ENCODE measurements at regions of chr10 and their contacts with region 1.

Region 1: DNA sequence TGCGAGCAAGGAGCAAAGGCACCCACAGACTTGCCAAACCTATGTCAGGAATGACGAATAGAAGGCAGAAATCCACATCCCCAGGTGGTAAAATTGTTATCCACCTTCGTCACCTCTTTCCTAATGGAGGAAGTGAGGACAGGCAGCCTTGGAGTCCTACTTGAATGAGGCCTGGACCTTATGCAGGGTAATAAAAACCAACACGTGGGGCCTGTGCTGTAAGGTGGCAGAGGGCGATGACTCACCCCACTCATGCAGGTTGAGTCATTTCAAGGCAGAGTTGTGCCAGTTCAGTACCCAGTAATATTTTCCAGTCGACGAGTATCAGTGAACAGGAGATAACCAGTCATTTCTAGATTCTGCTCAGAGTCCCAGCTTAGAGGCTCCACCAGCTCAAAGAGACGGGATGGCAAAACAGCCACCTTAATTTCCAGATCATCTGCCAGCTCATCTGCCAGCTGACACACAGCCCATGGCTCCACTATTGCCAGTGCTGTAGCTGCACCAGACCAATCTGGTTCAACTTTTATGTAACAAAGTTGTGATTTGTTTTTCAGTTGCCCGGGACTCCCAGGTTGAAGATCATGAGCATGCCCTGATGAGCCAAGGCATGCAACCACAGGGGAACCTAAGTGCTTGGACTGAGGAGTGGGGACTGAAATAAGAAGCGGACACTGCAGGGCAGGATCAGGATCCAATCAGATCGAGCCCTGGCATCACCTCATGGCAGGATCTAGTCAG is 176.2 kb upstream of the ITGB1 start:
- DNase-seq: peak; percentile 88
- H3K4me3 Mint-ChIP-seq: peak overlapping the region; percentile 41
- H3K27ac Mint-ChIP-seq: peak overlapping the region; percentile 79
- H3K4me1 Mint-ChIP-seq: peaks cover 78% of the 10 kb centered on the region
- H3K27me3 Mint-ChIP-seq: no peaks in the 10 kb centered on the region

Region 2: GRCh38 chr10:31745612-31746376 is 1388.4 kb before region 1 on chr10:
- CTCF ChIA-PET with region 1: no interaction called
- intact Hi-C with region 1: loop called (anchors 10 kb)
- DNase-seq: peak; percentile 84
- H3K4me3 Mint-ChIP-seq: no peak overlapping the region
- H3K27ac Mint-ChIP-seq: peak overlapping the region; percentile 95
- H3K4me1 Mint-ChIP-seq: peaks cover 47% of the 10 kb centered on the region
- H3K27me3 Mint-ChIP-seq: no peaks in the 10 kb centered on the region

Region 3: GRCh38 chr10:32239770-32240169 is 894.4 kb before region 1 on chr10:
- CTCF ChIA-PET with region 1: no interaction called
- intact Hi-C with region 1: loop called (anchors 5 kb)
- DNase-seq: no peak
- H3K4me3 Mint-ChIP-seq: no peak overlapping the region
- H3K27ac Mint-ChIP-seq: no peak overlapping the region
- H3K4me1 Mint-ChIP-seq: peaks cover 9% of the 10 kb centered on the region
- H3K27me3 Mint-ChIP-seq: no peaks in the 10 kb centered on the region

Region 4: GRCh38 chr10:32680803-32681557 is 453.2 kb before region 1 on chr10:
- CTCF ChIA-PET with region 1: no interaction called
- intact Hi-C with region 1: no loop called
- DNase-seq: no peak
- H3K4me3 Mint-ChIP-seq: no peak overlapping the region
- H3K27ac Mint-ChIP-seq: no peak overlapping the region
- H3K4me1 Mint-ChIP-seq: no peaks in the 10 kb centered on the region
- H3K27me3 Mint-ChIP-seq: no peaks in the 10 kb centered on the region

Region 5: GRCh38 chr10:32771217-32771616 is 363.0 kb before region 1 on chr10:
- CTCF ChIA-PET with region 1: no interaction called
- intact Hi-C with region 1: no loop called
- DNase-seq: no peak
- H3K4me3 Mint-ChIP-seq: no peak overlapping the region
- H3K27ac Mint-ChIP-seq: no peak overlapping the region
- H3K4me1 Mint-ChIP-seq: no peaks in the 10 kb centered on the region
- H3K27me3 Mint-ChIP-seq: no peaks in the 10 kb centered on the region

Region 6: DNA sequence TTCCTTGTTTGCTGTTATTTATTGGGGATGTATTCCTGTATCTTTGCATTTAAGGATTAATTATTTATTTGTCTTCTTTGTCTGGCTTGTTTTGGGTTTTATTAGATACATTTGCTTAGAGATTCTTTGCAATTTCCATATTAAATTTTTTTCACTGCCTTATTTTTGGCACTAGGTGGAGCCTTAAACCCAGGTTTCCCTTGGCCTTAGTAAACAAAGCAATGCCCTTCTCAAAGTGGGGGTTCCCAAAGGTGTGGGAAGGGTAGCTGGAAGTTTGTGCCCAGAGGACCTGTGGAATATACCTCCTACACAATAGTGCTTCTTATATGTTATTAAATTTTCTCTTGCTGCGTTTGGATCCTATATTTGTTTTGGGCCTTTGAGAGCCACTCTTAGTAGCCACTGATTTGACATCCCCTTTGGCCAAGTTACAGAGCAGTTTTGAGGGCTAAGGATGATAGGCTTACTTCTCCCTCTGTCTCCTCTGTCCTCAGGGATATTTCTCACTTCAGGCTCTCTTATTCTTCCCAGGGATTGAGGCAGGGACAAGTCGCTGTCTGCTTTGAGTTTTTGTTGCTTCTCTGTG is 338.5 kb before region 1 on chr10:
- CTCF ChIA-PET with region 1: no interaction called
- intact Hi-C with region 1: loop called (anchors 1 kb)
- DNase-seq: peak; percentile 17
- H3K4me3 Mint-ChIP-seq: no peak overlapping the region
- H3K27ac Mint-ChIP-seq: no peak overlapping the region
- H3K4me1 Mint-ChIP-seq: no peaks in the 10 kb centered on the region
- H3K27me3 Mint-ChIP-seq: no peaks in the 10 kb centered on the region

Region 7: GRCh38 chr10:33099748-33100147 is 34.4 kb before region 1 on chr10:
- CTCF ChIA-PET with region 1: no interaction called
- intact Hi-C with region 1: loop called (anchors 1 kb)
- DNase-seq: no peak
- H3K4me3 Mint-ChIP-seq: no peak overlapping the region
- H3K27ac Mint-ChIP-seq: no peak overlapping the region
- H3K4me1 Mint-ChIP-seq: peaks cover 30% of the 10 kb centered on the region
- H3K27me3 Mint-ChIP-seq: no peaks in the 10 kb centered on the region

Region 8: DNA sequence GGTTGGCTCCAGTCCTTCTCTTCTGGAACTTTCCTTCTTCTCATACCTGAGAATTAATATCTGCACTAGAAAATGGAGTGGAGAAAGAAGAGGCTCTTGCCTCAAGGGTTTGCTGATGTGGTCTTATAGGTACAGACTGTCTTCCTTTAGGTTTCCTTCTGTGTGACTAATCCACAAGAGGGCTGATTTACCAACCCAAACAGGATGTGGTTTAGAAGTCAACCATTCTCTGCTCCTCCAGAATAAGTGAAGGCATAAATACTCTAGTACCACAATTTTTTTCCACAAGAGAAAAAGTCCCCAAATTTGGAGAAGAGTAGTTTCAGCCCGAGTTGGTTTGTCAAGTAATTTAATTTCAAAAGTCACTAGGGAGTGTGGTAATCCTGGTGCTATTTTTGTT is 114.5 kb after region 1 on chr10:
- CTCF ChIA-PET with region 1: interaction called, 3 read pairs
- intact Hi-C with region 1: loop called (anchors 1 kb)
- DNase-seq: peak; percentile 49
- H3K4me3 Mint-ChIP-seq: no peak overlapping the region
- H3K27ac Mint-ChIP-seq: no peak overlapping the region
- H3K4me1 Mint-ChIP-seq: peaks cover 75% of the 10 kb centered on the region
- H3K27me3 Mint-ChIP-seq: no peaks in the 10 kb centered on the region

Region 9: GRCh38 chr10:34121781-34122628 is 987.8 kb after region 1 on chr10:
- CTCF ChIA-PET with region 1: no interaction called
- intact Hi-C with region 1: loop called (anchors 10 kb)
- DNase-seq: peak; percentile 41
- H3K4me3 Mint-ChIP-seq: no peak overlapping the region
- H3K27ac Mint-ChIP-seq: peak overlapping the region; percentile 4
- H3K4me1 Mint-ChIP-seq: peaks cover 28% of the 10 kb centered on the region
- H3K27me3 Mint-ChIP-seq: no peaks in the 10 kb centered on the region